HEK293 (cell line): ENCODE measurements at regions of chr22 and their contacts with region 1.

Region 1: GRCh38 chr22:31661851-31662656 is at the start of gene PISD:
- H3K4me3 ChIP-seq: peak within 1 kb of the TSS; percentile 94
- H3K27ac ChIP-seq: peak within 1 kb of the TSS; percentile 33; the same call in 1 of the 2 replicates
- H3K4me1 ChIP-seq: no peaks in the 10 kb centered on the region
- CTCF ChIP-seq: no peak

Region 2: GRCh38 chr22:30910358-30910757 is 751.7 kb before region 1 on chr22:
- CTCF ChIA-PET with region 1: no interaction called
- POLR2A ChIA-PET with region 1: no interaction called
- H3K4me3 ChIP-seq: no peak overlapping the region
- H3K27ac ChIP-seq: no peak overlapping the region
- H3K4me1 ChIP-seq: no peaks in the 10 kb centered on the region
- CTCF ChIP-seq: no peak

Region 3: DNA sequence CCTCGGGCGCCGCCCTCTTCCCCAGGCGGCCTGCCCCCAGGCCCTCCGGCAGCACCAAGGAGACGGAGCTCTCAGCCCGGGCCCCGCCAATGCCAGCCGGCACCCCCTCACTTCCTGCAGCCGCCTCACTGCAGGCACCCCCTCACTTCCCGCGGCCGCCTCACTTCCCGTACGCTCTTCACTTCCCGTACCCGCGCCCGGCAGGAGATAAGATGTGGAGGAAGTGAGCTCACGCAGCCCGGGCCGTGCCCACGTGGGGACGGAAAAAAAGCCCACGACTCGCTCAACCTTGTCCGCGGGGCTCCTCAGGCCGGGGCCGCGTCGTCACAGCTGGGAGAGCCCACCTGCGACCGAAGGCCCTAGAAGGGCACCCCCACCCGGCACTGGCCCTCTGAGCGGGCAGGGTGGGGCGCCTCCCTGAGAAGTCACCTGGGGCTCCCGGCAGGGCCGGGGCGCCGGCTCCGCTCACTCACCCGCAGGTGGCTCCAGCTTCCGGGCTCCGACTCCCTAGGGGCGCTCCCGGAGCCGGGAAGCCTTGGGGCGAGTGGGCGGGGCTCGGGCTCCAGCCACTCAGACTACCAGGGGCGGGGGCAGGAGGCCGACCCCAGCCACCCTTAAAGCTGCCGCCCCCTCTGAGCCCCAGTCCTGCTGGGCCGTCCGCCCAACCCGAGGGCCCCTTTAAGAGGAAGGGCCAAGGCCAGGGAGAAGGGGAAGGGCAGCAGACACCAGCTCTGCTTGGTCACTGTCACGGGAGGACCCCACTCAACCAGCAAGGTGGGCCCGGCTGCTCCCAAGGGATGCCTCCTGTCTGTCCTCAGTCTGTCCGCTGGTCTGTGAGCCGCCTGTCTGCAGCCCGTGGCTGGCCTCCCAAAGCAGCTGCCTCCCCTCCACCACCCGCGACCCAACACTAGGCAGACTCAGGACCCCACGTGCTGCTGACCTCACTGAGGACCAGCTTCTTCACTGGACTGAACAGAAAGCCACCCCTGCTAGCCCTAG is 31.4 kb before region 1 on chr22:
- CTCF ChIA-PET with region 1: interaction called, 6 read pairs
- POLR2A ChIA-PET with region 1: interaction called, 39 read pairs
- H3K4me3 ChIP-seq: peak overlapping the region; percentile 73
- H3K27ac ChIP-seq: peak overlapping the region; percentile 80
- H3K4me1 ChIP-seq: peaks cover 2% of the 10 kb centered on the region; the same call in 1 of the 2 replicates
- CTCF ChIP-seq: no peak; the same call in 1 of the 2 replicates

Region 4: DNA sequence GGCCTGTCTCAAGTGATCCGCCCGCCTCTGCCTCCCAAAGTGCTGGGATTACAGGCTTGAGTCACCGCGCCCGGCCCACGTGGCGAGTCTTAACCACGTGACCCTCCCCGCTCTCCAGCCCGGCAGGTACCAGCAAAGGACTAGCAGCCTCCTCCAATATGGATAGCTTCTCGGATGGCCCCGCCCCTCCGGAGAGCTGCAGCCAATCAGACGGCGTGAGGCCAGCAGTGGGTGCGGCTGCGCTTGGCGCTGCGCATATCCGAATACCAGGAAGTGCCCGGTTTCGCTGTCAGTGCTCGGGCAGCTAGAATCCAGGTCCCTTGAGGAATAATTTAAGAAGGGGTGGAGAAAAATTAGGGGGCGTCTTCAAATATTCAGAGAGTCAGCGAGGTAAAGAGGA is 14.6 kb after region 1 on chr22:
- CTCF ChIA-PET with region 1: interaction called, 42 read pairs
- POLR2A ChIA-PET with region 1: interaction called, 22 read pairs
- H3K4me3 ChIP-seq: peak overlapping the region; percentile 26
- H3K27ac ChIP-seq: no peak overlapping the region
- H3K4me1 ChIP-seq: no peaks in the 10 kb centered on the region; the same call in 1 of the 2 replicates
- CTCF ChIP-seq: no peak

Region 5: DNA sequence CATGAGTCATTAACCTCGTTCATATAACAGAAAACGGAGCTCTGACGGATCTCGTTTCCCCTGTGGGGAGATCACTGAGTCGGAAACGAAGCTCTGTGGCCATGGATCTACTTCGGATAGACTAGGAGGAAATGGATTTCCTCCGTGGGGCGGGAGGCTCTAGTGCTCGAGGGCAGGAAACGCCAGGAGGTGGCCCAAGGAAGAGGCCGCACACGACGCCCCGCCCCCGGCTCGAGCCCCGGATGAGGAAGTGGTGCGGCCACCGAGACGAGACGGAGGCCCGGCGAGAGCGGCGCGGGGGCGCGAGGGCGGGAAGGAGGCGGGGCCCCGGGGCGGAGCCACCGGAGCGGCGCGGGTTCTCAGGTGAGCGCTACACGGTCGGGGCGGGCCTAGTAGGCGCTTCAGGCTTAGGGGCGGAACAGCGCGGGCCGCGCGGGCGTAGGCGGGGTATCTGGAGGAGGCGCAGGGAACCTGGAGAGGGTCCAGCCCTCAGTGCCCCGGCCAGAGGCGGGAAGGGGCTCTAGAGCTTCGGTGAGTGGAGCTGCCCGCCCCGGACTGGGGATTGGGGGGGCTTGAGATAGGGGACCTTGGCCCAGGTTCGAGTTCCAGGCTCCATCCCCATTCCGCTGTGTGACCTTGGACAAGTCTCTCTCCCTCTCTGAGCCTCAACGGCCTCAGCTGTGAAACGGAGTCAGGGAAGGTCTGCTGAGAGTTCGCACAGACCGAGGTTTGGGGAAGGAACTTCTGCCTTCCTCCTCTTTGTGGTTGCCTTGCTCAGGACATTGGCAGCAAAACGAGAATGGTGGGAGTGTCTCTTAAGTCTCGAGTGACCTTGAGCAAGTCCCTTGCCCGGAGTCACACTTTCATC is 91.8 kb after region 1 on chr22 and contains the start of gene DEPDC5:
- CTCF ChIA-PET with region 1: interaction called, 3 read pairs
- POLR2A ChIA-PET with region 1: interaction called, 20 read pairs
- H3K4me3 ChIP-seq: peak within 1 kb of the TSS; percentile 92
- H3K27ac ChIP-seq: peak within 1 kb of the TSS; percentile 94
- H3K4me1 ChIP-seq: peaks cover 20% of the 10 kb centered on the region; the same call in 1 of the 2 replicates
- CTCF ChIP-seq: no peak

Region 6: DNA sequence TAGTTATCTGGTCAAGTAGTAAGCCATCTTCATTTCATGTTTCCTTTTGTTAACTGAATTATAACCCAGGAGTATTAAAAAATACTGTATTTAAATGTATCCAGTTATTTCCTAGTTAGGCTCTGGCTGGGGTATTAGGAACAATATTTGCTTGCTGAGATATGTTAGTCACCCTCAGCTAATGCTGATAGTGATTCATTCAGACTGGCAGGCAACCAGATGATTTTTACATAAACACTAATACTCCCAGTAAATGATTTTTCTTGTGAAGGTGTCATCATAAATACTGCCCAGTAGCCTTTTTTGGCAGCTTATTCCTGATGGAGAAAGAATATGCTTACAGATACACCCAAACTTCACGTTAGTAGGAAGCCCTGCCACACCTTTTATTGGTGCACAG is 290.4 kb after region 1 on chr22:
- CTCF ChIA-PET with region 1: interaction called, 10 read pairs
- POLR2A ChIA-PET with region 1: interaction called, 10 read pairs
- H3K4me3 ChIP-seq: no peak overlapping the region
- H3K27ac ChIP-seq: no peak overlapping the region
- H3K4me1 ChIP-seq: no peaks in the 10 kb centered on the region; the same call in none of the 2 replicates
- CTCF ChIP-seq: no peak